ENCODE measurements at regions of chr13 and their contacts with region 1.

Region 1: DNA sequence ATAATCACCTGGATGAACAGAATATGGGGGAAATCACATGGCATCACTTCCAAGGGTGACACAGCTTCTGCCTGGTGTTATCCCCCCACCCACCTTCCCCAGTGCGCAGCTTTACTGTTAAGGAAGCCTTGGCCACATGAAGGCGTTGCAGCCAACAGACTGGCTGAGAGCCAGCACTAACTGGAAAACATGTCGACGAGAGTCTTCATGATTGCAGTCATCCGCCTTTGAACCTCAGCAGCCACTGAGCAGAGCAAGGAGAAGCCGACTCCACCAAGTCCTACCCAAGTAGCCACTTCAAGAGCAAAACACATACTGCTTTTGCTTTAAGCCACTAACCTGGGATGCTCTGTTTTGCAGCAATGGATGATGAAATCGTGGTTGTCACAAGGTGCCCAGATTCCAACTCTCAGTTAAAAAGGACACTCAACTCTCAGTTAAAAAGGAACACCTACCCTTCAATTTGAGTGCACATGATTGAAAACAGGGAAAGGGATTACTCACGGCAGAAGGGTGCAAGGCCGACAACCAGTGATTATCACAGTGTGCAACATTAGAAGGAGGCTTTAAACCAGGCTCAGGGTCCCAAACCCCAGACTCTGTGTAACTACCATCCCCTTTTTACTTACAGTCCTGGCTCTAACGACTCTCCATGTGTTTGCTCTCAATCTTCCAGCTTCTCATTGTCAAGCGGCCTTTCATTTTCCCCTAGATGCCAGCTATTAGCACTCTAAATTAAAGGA is 149.1 kb downstream of the KLF12 start:
- DNase-seq: peak; percentile 89
- ATAC-seq: peak; percentile 90
- H3K4me3 Mint-ChIP-seq: peak overlapping the region; percentile 58
- H3K27ac Mint-ChIP-seq: peak overlapping the region; percentile 98
- H3K4me1 Mint-ChIP-seq: peaks cover 36% of the 10 kb centered on the region
- H3K27me3 Mint-ChIP-seq: no peaks in the 10 kb centered on the region

Region 2: GRCh38 chr13:73544175-73544574 is 440.9 kb before region 1 on chr13:
- CTCF ChIA-PET with region 1: no interaction called
- POLR2A ChIA-PET with region 1: no interaction called
- intact Hi-C with region 1: no loop called
- DNase-seq: no peak
- ATAC-seq: no peak
- H3K4me3 Mint-ChIP-seq: no peak overlapping the region
- H3K27ac Mint-ChIP-seq: no peak overlapping the region
- H3K4me1 Mint-ChIP-seq: no peaks in the 10 kb centered on the region
- H3K27me3 Mint-ChIP-seq: no peaks in the 10 kb centered on the region

Region 3: GRCh38 chr13:73934215-73934623 is 50.9 kb before region 1 on chr13:
- CTCF ChIA-PET with region 1: interaction called, 3 read pairs
- POLR2A ChIA-PET with region 1: no interaction called
- intact Hi-C with region 1: loop called in 1 of 2 experiments (anchors 2 kb)
- DNase-seq: no peak
- ATAC-seq: peak; percentile 14
- H3K4me3 Mint-ChIP-seq: no peak overlapping the region
- H3K27ac Mint-ChIP-seq: no peak overlapping the region
- H3K4me1 Mint-ChIP-seq: peaks cover 55% of the 10 kb centered on the region
- H3K27me3 Mint-ChIP-seq: no peaks in the 10 kb centered on the region

Region 4: GRCh38 chr13:73943137-73943964 is 41.8 kb before region 1 on chr13:
- CTCF ChIA-PET with region 1: interaction called, 3 read pairs
- POLR2A ChIA-PET with region 1: no interaction called
- intact Hi-C with region 1: loop called in 1 of 2 experiments (anchors 1 kb)
- DNase-seq: no peak
- ATAC-seq: peak; percentile 88
- H3K4me3 Mint-ChIP-seq: peak overlapping the region; percentile 50
- H3K27ac Mint-ChIP-seq: peak overlapping the region; percentile 92
- H3K4me1 Mint-ChIP-seq: peaks cover 83% of the 10 kb centered on the region
- H3K27me3 Mint-ChIP-seq: no peaks in the 10 kb centered on the region

Region 5: DNA sequence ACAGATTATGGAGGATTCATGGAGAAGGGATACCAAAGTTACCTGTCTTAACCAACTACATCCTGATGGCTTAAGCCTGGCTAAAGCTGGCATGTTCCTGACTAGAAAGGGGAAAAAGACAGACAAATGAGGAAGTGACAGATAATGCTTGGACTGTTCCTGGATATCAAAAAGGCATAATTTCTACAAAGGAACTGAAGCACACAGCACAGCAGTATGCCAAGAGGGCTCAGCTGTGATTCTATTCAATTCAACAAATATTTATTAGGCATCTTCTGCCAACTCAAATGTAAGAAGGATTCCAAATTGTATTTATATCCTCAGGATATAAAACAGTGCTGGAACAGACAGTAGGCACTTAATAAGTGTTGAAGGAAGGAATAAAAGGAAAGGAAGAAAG is 89.6 kb after region 1 on chr13:
- CTCF ChIA-PET with region 1: no interaction called
- POLR2A ChIA-PET with region 1: no interaction called
- intact Hi-C with region 1: no loop called
- DNase-seq: no peak
- ATAC-seq: no peak
- H3K4me3 Mint-ChIP-seq: no peak overlapping the region
- H3K27ac Mint-ChIP-seq: no peak overlapping the region
- H3K4me1 Mint-ChIP-seq: peaks cover 61% of the 10 kb centered on the region
- H3K27me3 Mint-ChIP-seq: no peaks in the 10 kb centered on the region

Region 6: DNA sequence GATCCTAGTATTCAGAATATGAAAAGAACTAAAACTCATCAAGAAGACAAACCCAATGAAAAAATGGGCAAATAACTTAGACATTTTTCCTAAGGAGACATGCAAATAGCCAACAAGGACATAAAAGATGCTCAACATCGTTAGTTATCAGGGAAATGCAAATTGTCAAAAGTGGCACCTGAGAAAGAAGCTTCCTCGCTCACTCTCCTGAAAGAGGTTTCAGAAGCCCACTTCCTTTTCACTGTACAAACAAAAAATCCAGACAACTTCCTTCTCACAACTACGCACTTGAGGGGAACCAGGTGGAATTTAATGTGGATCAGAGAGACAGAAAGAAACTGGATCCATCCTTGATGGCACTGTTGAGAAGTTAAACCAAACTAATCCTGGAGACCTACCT is 107.6 kb after region 1 on chr13:
- CTCF ChIA-PET with region 1: no interaction called
- POLR2A ChIA-PET with region 1: no interaction called
- intact Hi-C with region 1: no loop called
- DNase-seq: no peak
- ATAC-seq: no peak
- H3K4me3 Mint-ChIP-seq: peak overlapping the region; percentile 0
- H3K27ac Mint-ChIP-seq: peak overlapping the region; percentile 61
- H3K4me1 Mint-ChIP-seq: peaks cover 68% of the 10 kb centered on the region
- H3K27me3 Mint-ChIP-seq: no peaks in the 10 kb centered on the region